PC-9 (cell line): ENCODE measurements at regions of chr7 and their contacts with region 1.

Region 1: DNA sequence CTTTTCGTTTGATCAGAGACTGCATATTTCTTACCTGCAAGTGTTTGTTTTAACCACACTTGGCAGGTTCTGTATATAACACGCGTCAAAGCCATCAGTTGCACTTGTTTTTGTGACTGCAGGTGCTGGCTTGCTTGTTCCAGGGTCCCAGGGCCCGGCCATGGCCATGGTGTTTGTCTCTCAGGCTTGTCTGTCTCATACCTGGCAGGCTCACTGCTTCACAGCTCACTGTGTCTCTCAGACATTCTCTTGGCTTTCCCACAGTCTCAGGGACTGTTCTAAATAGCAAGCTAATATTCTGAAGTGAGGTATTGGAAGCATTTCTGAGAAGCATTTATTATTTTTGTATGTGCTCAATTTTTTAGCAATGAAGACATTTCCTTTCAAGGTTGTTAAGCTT is 46.9 kb downstream of the GPR141 start:
- DNase-seq: no peak
- H3K4me3 ChIP-seq: no peak overlapping the region
- H3K27ac ChIP-seq: no peak overlapping the region
- H3K4me1 ChIP-seq: no peaks in the 10 kb centered on the region
- H3K27me3 ChIP-seq: peaks cover 13% of the 10 kb centered on the region; the same call in 1 of the 2 replicates
- CTCF ChIP-seq: no peak

Region 2: DNA sequence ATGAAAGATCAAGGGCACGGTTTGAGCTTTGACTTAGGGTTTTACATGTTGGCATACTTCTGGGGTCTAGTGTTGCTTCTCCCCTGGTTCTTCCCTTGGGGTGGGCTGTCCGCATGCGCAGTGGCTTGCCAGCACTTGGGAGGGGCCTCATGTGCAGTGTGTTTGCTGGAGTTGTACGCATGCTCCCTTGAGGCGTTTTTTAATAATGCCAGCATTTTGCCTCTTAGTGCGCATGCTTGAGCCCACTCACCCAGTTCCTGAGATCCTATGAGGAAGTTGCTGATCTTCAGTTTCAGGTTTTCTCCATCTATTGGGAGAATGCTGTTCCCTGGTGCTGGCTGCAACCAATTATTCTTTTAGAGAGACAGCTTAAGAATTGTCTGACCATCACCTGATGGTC is 160.4 kb before region 1 on chr7:
- CTCF ChIA-PET with region 1: no interaction called
- POLR2A ChIA-PET with region 1: no interaction called
- intact Hi-C with region 1: no loop called
- DNase-seq: no peak
- H3K4me3 ChIP-seq: peak overlapping the region; percentile 45
- H3K27ac ChIP-seq: no peak overlapping the region
- H3K4me1 ChIP-seq: no peaks in the 10 kb centered on the region
- H3K27me3 ChIP-seq: no peaks in the 10 kb centered on the region
- CTCF ChIP-seq: no peak

Region 3: GRCh38 chr7:37707754-37708485 is 22.6 kb before region 1 on chr7:
- CTCF ChIA-PET with region 1: interaction called, 10 read pairs
- POLR2A ChIA-PET with region 1: no interaction called
- intact Hi-C with region 1: no loop called
- DNase-seq: no peak
- H3K4me3 ChIP-seq: no peak overlapping the region
- H3K27ac ChIP-seq: no peak overlapping the region
- H3K4me1 ChIP-seq: no peaks in the 10 kb centered on the region
- H3K27me3 ChIP-seq: no peaks in the 10 kb centered on the region
- CTCF ChIP-seq: no peak

Region 4: GRCh38 chr7:38374507-38374906 is 644.0 kb after region 1 on chr7:
- CTCF ChIA-PET with region 1: no interaction called
- POLR2A ChIA-PET with region 1: no interaction called
- intact Hi-C with region 1: no loop called
- DNase-seq: no peak
- H3K4me3 ChIP-seq: no peak overlapping the region
- H3K27ac ChIP-seq: no peak overlapping the region
- H3K4me1 ChIP-seq: no peaks in the 10 kb centered on the region
- H3K27me3 ChIP-seq: peaks cover 15% of the 10 kb centered on the region
- CTCF ChIP-seq: peak; percentile 79